Activated CD4-positive, alpha-beta T cell treated with anti-CD3 and anti-CD28 coated beads, Interleukin-2, amount 10 ng/mL, durations not matched to agents 24 days and 14 days (primary cell): ENCODE measurements at regions of chr17 and their contacts with region 1.

Region 1: GRCh38 chr17:42027961-42028790 is 8.3 kb downstream of the NKIRAS2 start:
- DNase-seq: no peak
- H3K4me3 Mint-ChIP-seq: no peak overlapping the region
- H3K27ac Mint-ChIP-seq: no peak overlapping the region
- H3K4me1 Mint-ChIP-seq: peaks cover 7% of the 10 kb centered on the region
- H3K27me3 Mint-ChIP-seq: no peaks in the 10 kb centered on the region

Region 2: GRCh38 chr17:42061646-42062487 is 33.7 kb after region 1 on chr17:
- intact Hi-C with region 1: loop called (anchors 5 kb)
- DNase-seq: no peak
- H3K4me3 Mint-ChIP-seq: no peak overlapping the region
- H3K27ac Mint-ChIP-seq: no peak overlapping the region
- H3K4me1 Mint-ChIP-seq: peaks cover 18% of the 10 kb centered on the region
- H3K27me3 Mint-ChIP-seq: no peaks in the 10 kb centered on the region

Region 3: DNA sequence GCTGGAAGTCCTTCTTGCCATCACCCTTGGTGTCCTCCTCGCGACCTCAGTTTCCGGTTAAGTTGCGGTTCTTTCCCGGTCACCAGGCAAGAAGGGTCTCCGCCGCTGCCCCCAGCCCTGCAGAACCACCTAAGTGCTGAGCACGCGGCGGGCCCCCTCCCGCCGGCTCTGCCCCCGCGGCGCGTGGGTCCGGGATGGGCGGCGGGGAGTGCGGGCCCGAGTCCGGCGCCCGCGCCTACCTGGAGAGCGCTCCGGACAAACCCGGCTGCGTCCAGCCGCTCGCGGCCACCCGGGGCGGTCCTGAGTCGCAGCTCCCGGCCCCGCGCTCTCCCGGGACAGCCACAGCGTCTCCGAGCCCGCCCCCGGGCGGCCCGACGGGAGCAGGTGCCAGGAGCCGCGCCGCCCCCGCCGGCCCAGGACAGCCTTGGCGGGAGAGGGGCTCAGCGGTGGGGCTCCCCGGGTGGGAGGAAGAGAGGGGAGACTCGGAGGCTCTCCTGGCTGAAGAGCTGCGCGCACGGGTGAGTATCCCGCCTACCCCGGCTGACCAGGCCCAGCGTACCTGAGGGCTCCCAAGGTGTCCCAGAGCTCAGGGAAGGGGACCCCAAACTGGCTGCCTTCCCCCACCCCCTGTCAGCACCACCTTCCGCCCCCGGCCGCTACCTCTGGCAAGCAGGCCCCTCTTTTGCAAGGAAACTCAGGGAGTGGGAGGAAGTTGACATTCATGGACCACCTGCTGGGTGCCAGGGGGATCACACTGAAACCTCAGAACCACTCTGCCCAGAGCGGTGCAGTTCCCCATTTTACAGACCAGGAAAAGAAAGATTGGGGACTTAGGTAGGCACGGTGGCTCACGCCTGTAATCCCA is 44.4 kb after region 1 on chr17:
- intact Hi-C with region 1: no loop called
- DNase-seq: no peak
- H3K4me3 Mint-ChIP-seq: peak overlapping the region; percentile 53
- H3K27ac Mint-ChIP-seq: no peak overlapping the region
- H3K4me1 Mint-ChIP-seq: peaks cover 5% of the 10 kb centered on the region
- H3K27me3 Mint-ChIP-seq: peaks cover 30% of the 10 kb centered on the region

Region 4: DNA sequence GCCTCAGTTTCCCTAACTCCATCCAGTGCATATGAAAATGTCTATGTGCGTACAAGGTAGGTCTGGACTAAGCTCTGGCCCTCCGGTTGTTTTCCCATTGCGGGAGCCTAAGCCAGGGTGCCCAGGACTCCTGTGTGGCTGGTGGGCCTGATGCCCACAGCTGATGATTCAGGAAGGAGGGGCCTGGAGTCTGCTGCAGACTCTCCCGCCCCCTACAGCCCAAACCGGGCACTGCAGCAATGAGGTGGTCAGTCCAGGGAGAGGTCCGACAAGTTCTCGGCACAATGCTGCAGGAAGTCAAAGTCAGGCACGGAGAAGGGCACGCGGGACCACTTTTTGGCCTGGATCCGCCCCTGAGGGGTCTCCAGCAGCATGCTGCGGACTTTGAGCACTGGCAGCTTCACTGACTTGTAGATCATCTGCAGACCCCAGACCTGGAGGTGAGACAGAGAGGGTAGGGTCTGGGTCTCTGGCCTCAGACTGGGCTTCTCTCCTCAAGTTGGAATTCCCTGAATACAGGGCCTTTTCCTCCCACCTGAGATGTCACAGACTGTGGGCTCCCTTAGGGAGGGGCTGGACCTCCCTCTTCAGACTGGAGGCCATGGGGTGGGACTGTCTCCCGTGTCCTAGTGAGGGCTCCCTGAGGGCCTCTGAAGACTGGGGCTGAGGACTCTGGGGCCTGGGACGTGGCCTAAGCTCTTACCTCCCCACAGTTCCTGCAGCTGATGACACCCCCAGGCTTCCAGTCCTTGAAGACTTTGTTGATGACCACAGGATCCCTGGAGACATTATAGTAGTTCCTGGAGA is 73.5 kb after region 1 on chr17:
- intact Hi-C with region 1: loop called (anchors 5 kb)
- DNase-seq: peak; percentile 91
- H3K4me3 Mint-ChIP-seq: no peak overlapping the region
- H3K27ac Mint-ChIP-seq: no peak overlapping the region
- H3K4me1 Mint-ChIP-seq: peaks cover 7% of the 10 kb centered on the region
- H3K27me3 Mint-ChIP-seq: peaks cover 16% of the 10 kb centered on the region